BJ (cell line): ENCODE measurements at regions of chr18 and their contacts with region 1.

Region 1: DNA sequence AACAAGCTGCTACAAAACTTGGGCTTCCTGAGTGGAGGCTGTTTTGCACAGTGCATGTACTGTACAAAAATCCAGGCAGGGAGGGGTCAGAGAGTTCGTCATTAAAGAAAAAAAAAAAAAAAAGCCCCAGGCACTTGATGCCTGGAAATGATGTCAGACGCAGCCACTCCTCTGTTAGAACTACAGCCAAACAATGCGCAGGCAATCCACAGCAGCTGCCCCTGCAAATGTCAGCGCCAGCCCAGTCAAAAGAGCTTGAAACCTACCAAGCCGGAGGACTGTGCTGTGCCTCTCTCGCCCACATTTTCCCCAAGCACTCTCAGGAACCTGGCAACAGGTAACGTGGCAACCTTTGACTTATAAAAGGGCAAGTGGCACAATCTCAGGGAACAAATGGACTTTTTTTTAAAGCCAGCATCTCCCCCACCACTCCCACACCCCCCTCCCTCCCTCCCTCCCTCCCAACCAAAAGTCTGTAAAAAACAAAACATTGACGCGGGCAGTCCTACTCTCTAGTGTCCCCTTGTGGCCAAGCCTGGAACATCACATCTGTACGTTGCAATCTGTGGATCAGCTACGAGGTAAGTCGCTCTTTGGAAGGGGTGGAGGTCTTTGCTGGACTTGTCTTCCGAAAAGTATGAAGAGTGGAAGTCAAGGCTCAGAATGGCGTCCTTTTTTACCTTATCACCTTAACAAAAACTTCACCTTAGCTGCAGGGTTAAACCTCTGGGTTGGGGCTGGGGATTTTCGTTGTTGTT is 144.1 kb downstream of the TGIF1 start:
- DNase-seq: peak; percentile 90
- H3K4me3 ChIP-seq: peak overlapping the region; percentile 45
- H3K27me3 ChIP-seq: no peaks in the 10 kb centered on the region
- CTCF ChIP-seq: peak; percentile 92

Region 2: GRCh38 chr18:3447895-3448837 is 145.9 kb before region 1 on chr18:
- CTCF ChIA-PET with region 1: interaction called, 53 read pairs
- POLR2A ChIA-PET with region 1: no interaction called
- DNase-seq: peak; percentile 92
- H3K4me3 ChIP-seq: peak overlapping the region; percentile 96
- H3K27me3 ChIP-seq: no peaks in the 10 kb centered on the region
- CTCF ChIP-seq: 0 out of 2 replicates have a peak, but pooled peaks have one; percentile 13

Region 3: DNA sequence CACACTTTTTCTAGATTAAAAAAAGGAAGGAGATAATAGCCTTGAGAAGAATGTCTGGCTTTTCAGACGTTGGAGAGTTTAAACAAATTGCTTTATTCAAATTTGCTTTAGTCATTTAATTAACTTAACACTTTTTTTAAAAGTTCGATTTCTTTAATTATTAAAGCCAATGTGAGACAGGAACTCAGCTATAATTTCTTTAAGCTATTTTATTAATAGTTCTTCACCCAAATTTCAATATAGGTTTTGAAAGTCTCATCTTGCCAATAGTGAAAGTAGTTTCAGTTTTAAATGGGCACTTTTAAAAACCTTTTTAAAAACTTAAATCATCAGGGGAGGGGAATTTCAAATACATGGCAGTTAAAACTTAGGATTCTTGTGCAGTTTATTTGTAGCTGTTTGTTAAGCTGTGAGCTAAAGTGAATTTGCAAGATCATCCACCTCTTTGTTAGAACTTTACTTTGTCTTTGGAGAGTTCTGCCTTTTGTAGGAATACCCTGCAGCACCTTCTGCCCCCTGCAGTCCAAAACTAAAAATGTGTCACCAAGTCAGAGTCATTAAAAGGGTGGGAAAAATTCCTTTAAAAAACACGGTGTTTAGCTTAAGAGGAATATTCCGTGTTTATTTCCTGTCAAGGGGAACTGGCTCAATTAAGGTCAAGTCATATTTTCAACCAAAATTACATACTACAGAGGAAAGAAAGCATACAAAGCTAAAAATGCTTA is 139.6 kb before region 1 on chr18:
- CTCF ChIA-PET with region 1: interaction called, 53 read pairs
- POLR2A ChIA-PET with region 1: interaction called, 4 read pairs
- DNase-seq: no peak
- H3K4me3 ChIP-seq: peak overlapping the region; percentile 26
- H3K27me3 ChIP-seq: no peaks in the 10 kb centered on the region
- CTCF ChIP-seq: peak; percentile 70

Region 4: DNA sequence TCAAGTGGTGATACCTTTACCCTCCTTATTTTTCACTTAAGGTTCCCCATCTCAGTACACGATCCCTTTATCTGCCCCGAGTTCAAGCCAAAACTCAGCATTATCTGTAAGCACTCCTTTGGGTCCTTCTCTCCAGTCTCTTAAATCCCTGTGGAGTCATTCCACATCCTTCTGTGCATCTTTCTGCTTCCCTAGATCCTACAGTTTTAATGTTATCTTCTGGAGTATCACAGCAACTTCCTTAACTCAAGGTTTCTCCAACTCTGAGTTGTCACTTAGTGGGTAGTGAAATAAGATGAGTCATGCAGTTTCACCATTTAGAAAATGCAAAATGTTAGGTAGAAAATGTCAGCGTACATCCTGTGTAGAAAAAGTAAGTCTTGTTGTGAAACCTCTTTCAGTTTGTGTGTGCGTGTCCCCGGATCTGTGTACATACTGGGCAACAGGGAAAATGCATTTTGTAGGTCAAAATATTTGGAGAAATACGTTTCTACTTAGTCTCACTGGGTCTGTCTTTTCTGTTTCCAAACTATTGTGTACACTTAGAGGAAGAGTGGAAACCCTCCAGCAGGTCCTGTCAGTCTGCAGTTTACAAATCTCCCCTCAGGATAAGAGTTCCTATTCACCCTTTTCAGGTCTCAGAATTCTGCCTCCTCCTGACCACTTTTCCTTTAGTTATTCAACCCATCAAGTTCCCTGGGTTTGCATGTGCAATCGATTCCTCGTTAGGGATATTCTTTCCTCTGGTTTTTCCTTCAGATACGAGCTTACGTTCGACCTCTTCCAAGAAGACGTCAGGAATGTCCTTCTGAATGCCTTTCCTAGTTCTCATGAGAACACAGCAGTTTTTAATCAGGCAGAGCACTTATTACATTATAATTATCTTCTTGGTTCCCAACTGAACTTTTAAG is 10.7 kb after region 1 on chr18:
- CTCF ChIA-PET with region 1: interaction called, 24 read pairs
- POLR2A ChIA-PET with region 1: interaction called, 20 read pairs
- DNase-seq: peak; percentile 97
- H3K4me3 ChIP-seq: peak overlapping the region; percentile 45
- H3K27me3 ChIP-seq: no peaks in the 10 kb centered on the region
- CTCF ChIP-seq: no peak

Region 5: GRCh38 chr18:3623769-3624545 is 29.9 kb after region 1 on chr18:
- CTCF ChIA-PET with region 1: interaction called, 13 read pairs
- POLR2A ChIA-PET with region 1: no interaction called
- DNase-seq: peak; percentile 91
- H3K4me3 ChIP-seq: peak overlapping the region; percentile 20; the same call in 1 of the 2 replicates
- H3K27me3 ChIP-seq: no peaks in the 10 kb centered on the region
- CTCF ChIP-seq: no peak

Region 6: GRCh38 chr18:3660739-3661515 is 66.8 kb after region 1 on chr18:
- CTCF ChIA-PET with region 1: interaction called, 55 read pairs
- POLR2A ChIA-PET with region 1: interaction called, 11 read pairs
- DNase-seq: no peak
- H3K4me3 ChIP-seq: no peak overlapping the region
- H3K27me3 ChIP-seq: no peaks in the 10 kb centered on the region
- CTCF ChIP-seq: no peak

Region 7: DNA sequence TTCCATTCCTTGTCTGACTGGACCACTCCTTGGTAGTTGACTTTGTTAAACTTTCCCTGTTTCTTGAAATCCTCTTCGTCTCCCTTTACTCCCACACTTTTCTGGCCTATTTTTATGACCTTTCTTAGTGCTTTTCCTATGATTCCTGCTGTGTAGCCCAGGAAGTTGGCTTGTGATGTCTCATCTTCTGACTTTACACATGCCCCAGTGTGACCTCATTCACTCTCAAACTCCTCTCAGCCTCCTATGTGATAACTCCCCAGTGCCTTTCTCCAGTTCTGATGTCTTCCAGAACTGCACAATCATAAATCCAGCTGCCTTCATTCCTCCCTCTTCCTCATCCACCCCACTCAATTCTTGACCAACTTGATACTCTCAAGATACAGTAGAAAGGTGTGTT is 263.5 kb after region 1 on chr18:
- CTCF ChIA-PET with region 1: no interaction called
- POLR2A ChIA-PET with region 1: no interaction called
- DNase-seq: no peak
- H3K4me3 ChIP-seq: no peak overlapping the region
- H3K27me3 ChIP-seq: no peaks in the 10 kb centered on the region
- CTCF ChIP-seq: no peak

Region 8: DNA sequence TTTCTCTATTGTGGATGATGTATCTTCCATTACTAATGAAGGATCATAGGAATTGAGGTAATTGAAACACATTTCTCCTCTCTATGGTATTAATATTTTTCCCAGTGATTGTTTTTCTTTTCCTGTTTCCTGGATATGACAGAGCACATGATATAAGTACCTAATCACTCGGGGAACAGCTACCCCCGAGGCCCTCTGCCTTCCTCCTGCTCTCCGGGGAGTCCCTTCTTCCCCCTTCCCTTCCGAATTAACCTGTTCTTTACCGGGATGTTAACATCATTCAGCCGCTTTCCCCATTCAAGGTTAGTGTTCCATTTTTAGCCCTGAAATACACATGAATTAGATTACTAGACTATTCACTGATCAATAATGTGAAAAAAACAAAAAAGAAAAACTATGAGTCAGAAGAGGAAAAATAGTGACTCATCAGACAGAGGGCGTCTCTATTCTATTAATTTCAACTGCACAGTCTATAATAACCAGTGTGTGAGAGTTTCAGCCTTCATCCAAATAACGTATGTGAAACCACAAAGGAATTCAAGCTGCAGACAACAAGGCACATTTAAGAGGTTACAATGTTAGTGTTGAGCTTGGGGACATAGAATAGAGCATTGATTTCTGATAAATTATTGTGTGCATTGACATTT is 410.2 kb after region 1 on chr18:
- CTCF ChIA-PET with region 1: no interaction called
- POLR2A ChIA-PET with region 1: no interaction called
- DNase-seq: no peak
- H3K4me3 ChIP-seq: no peak overlapping the region
- H3K27me3 ChIP-seq: no peaks in the 10 kb centered on the region
- CTCF ChIP-seq: no peak